Common myeloid progenitor, CD34-positive (primary cell): ENCODE measurements at regions of chr1 and their contacts with region 1.

Region 1: GRCh38 chr1:160681067-160681890 is 30.3 kb downstream of the CD48 start:
- DNase-seq: peak; percentile 88 to 94 (median 89)
- H3K4me3 ChIP-seq: no peak overlapping the region
- H3K27ac ChIP-seq: no peak overlapping the region
- H3K4me1 ChIP-seq: peaks cover 0 to 24% (median 13%) of the 10 kb centered on the region in 4 experiments
- H3K27me3 ChIP-seq: no peaks in the 10 kb centered on the region

Region 2: DNA sequence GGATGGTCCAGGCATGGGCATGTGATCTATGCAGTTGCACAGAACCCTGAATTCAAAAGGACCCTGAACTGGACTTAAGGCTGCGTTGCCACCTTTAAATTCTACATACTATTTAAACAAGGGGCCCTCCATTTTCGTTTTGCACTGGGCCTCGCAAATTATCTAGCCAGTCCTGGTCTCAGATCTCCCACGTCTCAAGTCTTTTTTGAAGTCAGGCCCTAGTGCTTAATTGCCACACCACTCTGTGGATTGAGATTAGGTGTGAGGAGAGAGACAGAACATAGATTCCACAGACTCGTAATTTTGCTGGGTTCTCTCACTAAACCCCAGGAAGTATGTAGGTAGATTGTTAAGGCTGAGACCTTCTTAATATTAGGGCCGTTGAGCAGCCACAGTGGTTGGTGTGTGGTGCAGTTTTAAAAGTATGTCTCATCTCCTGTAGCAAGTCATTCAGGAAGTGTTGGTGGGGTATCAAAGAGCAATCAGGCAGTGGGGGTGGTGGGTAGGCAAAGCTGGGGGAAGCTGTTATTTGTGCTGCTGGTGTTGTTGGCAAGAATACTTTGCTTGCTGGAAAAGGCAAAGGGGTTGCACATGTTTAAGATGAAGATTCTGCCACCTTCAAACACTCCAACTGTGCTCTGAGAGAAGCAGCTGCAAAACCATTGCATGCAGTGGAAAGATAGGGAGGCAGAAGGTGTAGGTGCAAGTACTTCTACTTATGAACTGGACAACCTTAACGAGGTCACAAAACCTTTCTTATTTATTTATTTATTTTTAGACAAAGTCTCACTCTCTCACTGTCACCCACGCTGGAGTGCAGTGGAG is 113.2 kb before region 1 on chr1:
- CTCF ChIA-PET with region 1: no interaction called
- POLR2A ChIA-PET with region 1: no interaction called
- DNase-seq: peak; percentile 87 to 98 (median 96)
- H3K4me3 ChIP-seq: peak overlapping the region in 4 of 7 experiments; percentile 10 to 51 (median 38)
- H3K27ac ChIP-seq: peak overlapping the region in 1 of 2 experiments; percentile 69
- H3K4me1 ChIP-seq: peaks cover 3 to 42% (median 27%) of the 10 kb centered on the region in 4 experiments
- H3K27me3 ChIP-seq: peaks cover 0 to 54% (median 9%) of the 10 kb centered on the region in 5 experiments

Region 3: GRCh38 chr1:160768295-160768657 is 87.0 kb after region 1 on chr1:
- CTCF ChIA-PET with region 1: interaction called, 38 read pairs
- POLR2A ChIA-PET with region 1: no interaction called
- DNase-seq: peak; percentile 73 to 88 (median 85)
- H3K4me3 ChIP-seq: peak overlapping the region in 1 of 7 experiments; percentile 27
- H3K27ac ChIP-seq: no peak overlapping the region
- H3K4me1 ChIP-seq: peaks cover 0 to 9% (median 3%) of the 10 kb centered on the region in 4 experiments
- H3K27me3 ChIP-seq: no peaks in the 10 kb centered on the region

Region 4: DNA sequence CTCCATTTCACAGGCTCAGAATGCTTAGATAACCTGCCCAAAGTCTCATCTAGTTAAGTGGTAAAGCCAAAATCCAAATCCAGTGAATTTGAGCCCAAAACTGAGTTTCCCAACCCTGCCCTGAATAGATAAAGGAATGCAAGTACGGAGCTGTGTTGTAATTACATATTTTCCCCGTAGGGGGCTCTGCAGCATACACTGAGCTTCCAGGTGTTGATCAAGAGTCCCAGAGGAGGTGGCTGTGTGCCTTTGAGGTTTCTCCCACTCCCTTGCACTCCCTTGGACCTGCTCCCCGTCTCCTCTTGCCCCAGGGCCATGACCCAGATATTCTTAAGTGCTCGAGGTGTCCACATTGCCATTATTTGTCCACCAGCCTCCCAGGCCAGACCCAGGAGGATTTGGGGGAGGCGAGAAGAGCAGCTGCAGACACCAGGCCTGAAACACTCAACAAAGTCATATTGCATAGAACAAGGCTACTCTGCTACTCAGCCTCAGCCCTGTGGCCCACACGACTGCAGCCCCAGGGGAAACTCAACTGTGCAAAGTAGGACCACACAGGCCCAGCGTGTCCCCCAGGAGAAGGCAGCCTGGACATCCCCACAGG is 96.3 kb after region 1 on chr1:
- CTCF ChIA-PET with region 1: interaction called, 10 read pairs
- POLR2A ChIA-PET with region 1: no interaction called
- DNase-seq: peak; percentile 35 to 50 (median 41)
- H3K4me3 ChIP-seq: no peak overlapping the region
- H3K27ac ChIP-seq: no peak overlapping the region
- H3K4me1 ChIP-seq: peaks cover 5 to 16% (median 10%) of the 10 kb centered on the region in 4 experiments
- H3K27me3 ChIP-seq: no peaks in the 10 kb centered on the region

Region 5: DNA sequence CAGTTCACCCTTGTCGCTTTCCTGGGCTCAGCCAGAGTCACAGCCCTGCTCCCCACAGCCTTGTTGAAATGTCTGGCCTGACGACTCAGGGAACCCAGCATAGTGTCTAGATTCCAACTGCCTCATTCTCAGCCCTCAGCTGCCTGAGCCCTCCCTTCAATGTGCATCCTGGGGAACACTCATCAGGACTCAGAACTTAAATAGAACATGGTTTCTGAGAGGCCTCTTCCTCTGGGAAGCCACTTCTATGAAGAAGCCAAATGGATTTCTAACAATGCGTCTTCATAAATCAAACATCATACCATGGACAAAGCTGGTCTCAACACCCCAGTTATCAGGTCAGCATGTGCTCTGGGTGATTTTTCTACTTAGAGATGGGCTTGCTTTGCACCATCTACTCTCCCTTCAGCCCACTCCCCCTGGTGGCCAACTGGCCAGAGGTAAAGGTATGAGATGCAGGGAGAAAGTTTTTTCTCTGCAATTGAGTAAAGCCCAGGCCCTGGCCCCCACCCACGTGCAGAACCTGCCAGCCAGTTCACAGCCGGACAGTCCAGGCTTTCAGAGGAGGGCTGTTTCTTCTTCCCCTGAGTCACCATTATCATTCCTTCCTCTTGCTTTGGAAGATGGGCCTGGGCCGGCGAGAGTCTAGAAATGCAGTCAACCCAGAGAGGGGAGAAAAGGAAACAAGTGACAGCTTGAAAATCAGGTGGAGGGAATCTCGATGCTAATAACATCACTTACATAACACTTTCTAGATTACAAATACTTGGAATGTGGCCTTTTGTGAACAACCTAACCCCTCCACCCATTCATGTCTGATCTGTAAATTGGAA is 149.3 kb after region 1 on chr1:
- CTCF ChIA-PET with region 1: interaction called, 44 read pairs
- POLR2A ChIA-PET with region 1: no interaction called
- DNase-seq: peak; percentile 57 to 74 (median 74)
- H3K4me3 ChIP-seq: no peak overlapping the region
- H3K27ac ChIP-seq: no peak overlapping the region
- H3K4me1 ChIP-seq: peaks cover 0 to 6% (median 2%) of the 10 kb centered on the region in 4 experiments
- H3K27me3 ChIP-seq: no peaks in the 10 kb centered on the region